ENCODE measurements at regions of chr10 and their contacts with region 1.

Region 1: DNA sequence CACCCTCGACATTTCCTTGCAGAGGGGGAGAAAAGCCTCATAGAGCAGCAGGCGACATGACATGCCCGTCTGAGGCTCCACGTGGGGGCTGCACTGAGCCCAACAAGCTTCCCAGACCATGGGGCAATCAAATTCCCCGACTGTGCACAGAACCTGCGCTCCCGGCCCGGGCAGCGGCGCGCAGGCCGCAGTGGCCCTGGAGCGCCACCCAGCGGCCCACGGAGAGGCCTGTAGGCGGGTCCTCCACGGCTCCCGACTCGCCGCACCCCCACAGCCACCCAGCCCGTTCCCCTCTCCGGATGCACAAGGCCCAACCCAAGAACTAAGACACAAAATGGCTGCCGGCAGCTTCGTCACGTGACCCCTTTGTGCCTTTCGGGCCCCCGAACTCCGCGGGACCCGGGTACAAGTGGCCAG is 816 bp downstream of the EPC1 start:
- DNase-seq: peak; percentile 96
- H3K4me3 ChIP-seq: peak overlapping the region; percentile 75 to 90 (median 89)
- H3K27ac ChIP-seq: peak overlapping the region; percentile 93
- H3K4me1 ChIP-seq: peaks cover 17% of the 10 kb centered on the region
- H3K27me3 ChIP-seq: no peaks in the 10 kb centered on the region
- CTCF ChIP-seq: peak; percentile 98 to 99
- POLR2A ChIP-seq: no peak

Region 2: DNA sequence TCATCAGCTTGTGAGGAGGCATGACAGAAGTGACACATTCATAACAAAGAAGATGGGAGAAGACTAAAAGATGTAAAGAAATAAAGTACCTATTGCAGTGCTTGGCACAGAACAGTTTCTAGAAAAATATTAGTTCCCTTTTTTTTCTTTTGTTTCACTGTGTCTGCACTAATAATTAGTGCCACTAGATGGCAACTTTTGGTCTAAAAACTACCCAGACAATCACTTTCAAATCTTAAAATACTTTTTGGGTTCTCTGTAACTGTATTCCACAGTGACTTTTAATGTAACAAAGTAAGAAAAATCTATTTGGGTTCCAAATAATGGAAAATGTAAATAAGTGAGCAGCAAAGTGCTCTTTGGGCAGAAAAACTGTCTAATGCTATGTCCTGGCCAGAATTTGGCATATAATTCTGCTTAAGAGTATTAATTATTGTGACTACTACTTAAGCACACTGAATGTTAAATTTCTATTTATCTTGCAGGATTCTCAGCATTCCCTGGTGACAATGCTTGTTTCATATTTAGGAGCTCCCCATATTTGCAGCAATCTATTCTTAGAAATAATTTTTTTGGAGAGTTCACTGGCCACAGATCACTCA is 155.2 kb before region 1 on chr10:
- CTCF ChIA-PET with region 1: interaction called, 3 read pairs
- POLR2A ChIA-PET with region 1: no interaction called
- dilution Hi-C with region 1: no loop called
- intact Hi-C with region 1: loop called (anchors 1 kb)
- DNase-seq: peak; percentile 76
- H3K4me3 ChIP-seq: no peak overlapping the region
- H3K27ac ChIP-seq: no peak overlapping the region
- H3K4me1 ChIP-seq: peaks cover 7% of the 10 kb centered on the region
- H3K27me3 ChIP-seq: peaks cover 0 to 1% of the 10 kb centered on the region in 2 experiments
- CTCF ChIP-seq: peak; percentile 42 to 53
- POLR2A ChIP-seq: no peak

Region 3: GRCh38 chr10:32256613-32257437 is 89.3 kb before region 1 on chr10:
- CTCF ChIA-PET with region 1: interaction called, 60 read pairs
- POLR2A ChIA-PET with region 1: no interaction called
- dilution Hi-C with region 1: no loop called
- intact Hi-C with region 1: loop called (anchors 1 kb)
- DNase-seq: peak; percentile 79
- H3K4me3 ChIP-seq: no peak overlapping the region
- H3K27ac ChIP-seq: no peak overlapping the region
- H3K4me1 ChIP-seq: no peaks in the 10 kb centered on the region
- H3K27me3 ChIP-seq: no peaks in the 10 kb centered on the region
- CTCF ChIP-seq: peak; percentile 87
- POLR2A ChIP-seq: no peak

Region 4: GRCh38 chr10:32357056-32357735 is 11.1 kb after region 1 on chr10:
- CTCF ChIA-PET with region 1: no interaction called
- POLR2A ChIA-PET with region 1: no interaction called
- dilution Hi-C with region 1: no loop called
- intact Hi-C with region 1: no loop called
- DNase-seq: no peak
- H3K4me3 ChIP-seq: no peak overlapping the region
- H3K27ac ChIP-seq: no peak overlapping the region
- H3K4me1 ChIP-seq: peaks cover 10% of the 10 kb centered on the region
- H3K27me3 ChIP-seq: no peaks in the 10 kb centered on the region
- CTCF ChIP-seq: no peak
- POLR2A ChIP-seq: no peak

Region 5: DNA sequence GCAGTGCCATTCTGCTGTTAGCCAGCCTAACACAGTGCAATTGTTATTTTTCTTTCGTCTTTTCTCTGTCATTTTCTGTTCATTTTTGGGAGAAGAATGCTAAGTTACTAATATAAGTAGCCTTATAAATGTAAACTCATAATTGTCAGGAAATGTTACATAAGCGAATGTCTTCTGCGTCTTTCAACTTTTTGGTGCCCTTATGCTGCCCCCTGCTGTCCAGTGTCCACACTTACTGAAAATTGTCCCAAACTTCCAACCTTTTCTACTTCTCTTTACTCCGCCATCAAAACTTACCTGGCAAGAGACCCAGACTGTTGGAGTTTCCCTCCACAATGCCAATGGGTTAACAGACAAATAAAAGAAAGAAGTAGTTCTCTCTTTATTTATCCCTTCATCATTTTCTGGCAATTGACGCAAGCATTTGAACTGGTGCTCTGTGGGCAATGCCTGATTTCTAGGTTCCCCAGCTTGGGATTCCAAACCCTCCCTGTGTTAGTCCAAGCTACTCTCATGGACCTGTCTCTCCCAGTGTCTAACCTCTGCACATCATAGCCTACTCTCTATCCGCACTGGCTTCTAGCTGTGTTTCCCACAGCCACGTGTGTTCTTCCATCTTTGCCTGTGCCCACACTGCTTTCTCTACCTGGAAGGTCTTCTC is 21.8 kb after region 1 on chr10:
- CTCF ChIA-PET with region 1: interaction called, 12 read pairs
- POLR2A ChIA-PET with region 1: no interaction called
- dilution Hi-C with region 1: no loop called
- intact Hi-C with region 1: loop called (anchors 1 kb)
- DNase-seq: peak; percentile 83
- H3K4me3 ChIP-seq: no peak overlapping the region
- H3K27ac ChIP-seq: no peak overlapping the region
- H3K4me1 ChIP-seq: peaks cover 2% of the 10 kb centered on the region
- H3K27me3 ChIP-seq: no peaks in the 10 kb centered on the region
- CTCF ChIP-seq: peak; percentile 70 to 72
- POLR2A ChIP-seq: no peak

Region 6: GRCh38 chr10:32386623-32387260 is 40.6 kb after region 1 on chr10:
- CTCF ChIA-PET with region 1: no interaction called
- POLR2A ChIA-PET with region 1: no interaction called
- dilution Hi-C with region 1: no loop called
- intact Hi-C with region 1: no loop called
- DNase-seq: no peak
- H3K4me3 ChIP-seq: no peak overlapping the region
- H3K27ac ChIP-seq: no peak overlapping the region
- H3K4me1 ChIP-seq: no peaks in the 10 kb centered on the region
- H3K27me3 ChIP-seq: peaks cover 2 to 4% of the 10 kb centered on the region in 2 experiments
- CTCF ChIP-seq: no peak
- POLR2A ChIP-seq: no peak

Region 7: GRCh38 chr10:32471232-32471631 is 125.1 kb after region 1 on chr10:
- CTCF ChIA-PET with region 1: no interaction called
- POLR2A ChIA-PET with region 1: no interaction called
- dilution Hi-C with region 1: no loop called
- intact Hi-C with region 1: no loop called
- DNase-seq: no peak
- H3K4me3 ChIP-seq: no peak overlapping the region
- H3K27ac ChIP-seq: no peak overlapping the region
- H3K4me1 ChIP-seq: no peaks in the 10 kb centered on the region
- H3K27me3 ChIP-seq: no peaks in the 10 kb centered on the region
- CTCF ChIP-seq: no peak
- POLR2A ChIP-seq: no peak

Measured in endothelial cell of umbilical vein (primary cell).